Right cardiac atrium (tissue), 5 donors: ENCODE measurements at regions of chr11 and their contacts with region 1.

Region 1: GRCh38 chr11:6443269-6444003 is 2.6 kb upstream of the HPX start:
- DNase-seq: peak; percentile 57 to 78 (median 77)
- ATAC-seq: peak; percentile 68 to 84
- H3K4me3 ChIP-seq: no peak overlapping the region
- H3K27ac ChIP-seq: no peak overlapping the region
- H3K4me1 ChIP-seq: no peaks in the 10 kb centered on the region
- H3K27me3 ChIP-seq: no peaks in the 10 kb centered on the region

Region 2: GRCh38 chr11:6377902-6378639 is 65.4 kb before region 1 on chr11:
- intact Hi-C with region 1: loop called in 3 of 4 experiments (anchors 5 kb)
- DNase-seq: no peak
- ATAC-seq: peak; percentile 34 to 80
- H3K4me3 ChIP-seq: no peak overlapping the region
- H3K27ac ChIP-seq: peak overlapping the region; percentile 15
- H3K4me1 ChIP-seq: no peaks in the 10 kb centered on the region
- H3K27me3 ChIP-seq: no peaks in the 10 kb centered on the region

Region 3: DNA sequence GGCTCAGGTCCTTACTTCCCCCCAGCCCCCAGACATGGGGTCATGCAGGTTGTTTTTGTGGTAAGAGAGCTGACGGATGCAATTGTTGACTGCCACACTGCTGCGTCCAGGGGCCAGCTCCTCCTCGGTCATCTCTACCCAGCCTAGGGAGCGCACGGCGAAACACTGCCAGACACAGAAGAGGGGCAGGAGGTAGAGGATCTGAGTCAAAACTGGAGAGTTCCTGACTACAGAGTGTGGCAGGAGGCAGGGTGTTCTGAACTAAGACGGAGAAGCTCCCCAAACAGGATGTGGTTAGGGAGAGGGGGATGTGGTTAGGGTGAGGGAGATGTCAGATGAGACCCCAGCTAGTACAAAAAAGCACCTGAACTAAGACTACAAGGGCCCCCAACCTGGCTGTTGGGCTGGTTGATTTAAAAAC is 40.9 kb before region 1 on chr11:
- intact Hi-C with region 1: no loop called
- DNase-seq: no peak
- ATAC-seq: no peak
- H3K4me3 ChIP-seq: no peak overlapping the region
- H3K27ac ChIP-seq: no peak overlapping the region
- H3K4me1 ChIP-seq: no peaks in the 10 kb centered on the region
- H3K27me3 ChIP-seq: no peaks in the 10 kb centered on the region

Region 4: GRCh38 chr11:6420677-6421076 is 22.8 kb before region 1 on chr11:
- intact Hi-C with region 1: loop called in 1 of 4 experiments (anchors 2 kb)
- DNase-seq: no peak
- ATAC-seq: no peak
- H3K4me3 ChIP-seq: no peak overlapping the region
- H3K27ac ChIP-seq: no peak overlapping the region
- H3K4me1 ChIP-seq: peaks cover 6% of the 10 kb centered on the region
- H3K27me3 ChIP-seq: no peaks in the 10 kb centered on the region

Region 5: DNA sequence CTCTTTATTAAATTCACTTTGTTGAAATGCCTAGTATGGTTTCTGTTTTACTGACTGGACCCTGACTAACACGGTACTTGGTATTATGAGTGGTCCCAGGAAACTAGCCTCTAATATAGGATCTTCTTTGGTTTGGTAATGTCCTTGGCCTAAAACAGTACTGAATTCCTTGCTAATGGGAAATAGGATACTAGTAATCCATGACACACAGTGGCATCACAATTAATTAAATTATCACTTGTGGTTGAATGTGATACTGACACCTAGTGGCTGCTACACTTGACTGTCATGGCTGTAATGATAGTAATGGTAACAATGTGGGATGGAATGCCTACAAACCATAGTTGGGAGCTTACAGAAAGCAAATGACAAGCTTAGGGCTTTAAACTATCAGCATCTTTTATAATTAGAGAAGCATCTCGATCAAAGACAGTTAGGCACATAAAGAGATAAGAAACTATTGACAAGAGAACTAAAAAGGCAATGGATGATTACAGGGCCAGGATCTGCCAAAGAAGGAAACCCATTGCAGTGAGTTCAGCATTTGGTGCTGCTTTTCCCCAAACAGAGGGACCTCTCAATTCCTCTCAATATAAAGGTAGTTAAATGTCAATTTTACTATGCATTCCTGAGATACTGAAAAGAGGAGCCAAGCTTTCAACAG is 62.3 kb after region 1 on chr11:
- intact Hi-C with region 1: loop called in 3 of 4 experiments (anchors 5 to 10 kb)
- DNase-seq: no peak
- ATAC-seq: peak; percentile 61 to 75
- H3K4me3 ChIP-seq: no peak overlapping the region
- H3K27ac ChIP-seq: no peak overlapping the region
- H3K4me1 ChIP-seq: no peaks in the 10 kb centered on the region
- H3K27me3 ChIP-seq: no peaks in the 10 kb centered on the region